Activated CD8-positive, alpha-beta memory T cell treated with anti-CD3 and anti-CD28 coated beads, Interleukin-2, amount 10 ng/mL, durations not matched to agents 7 days and 5 days (primary cell): ENCODE measurements at regions of chr2 and their contacts with region 1.

Region 1: GRCh38 chr2:63861220-63861822 is 19.6 kb downstream of the UGP2 start:
- DNase-seq: peak; percentile 61
- ATAC-seq: peak; percentile 49
- H3K4me3 Mint-ChIP-seq: no peak overlapping the region
- H3K27ac Mint-ChIP-seq: peak overlapping the region; percentile 62
- H3K4me1 Mint-ChIP-seq: peaks cover 48% of the 10 kb centered on the region
- H3K27me3 Mint-ChIP-seq: no peaks in the 10 kb centered on the region

Region 2: GRCh38 chr2:63692002-63692606 is 169.2 kb before region 1 on chr2:
- CTCF ChIA-PET with region 1: interaction called, 16 read pairs
- DNase-seq: no peak
- ATAC-seq: no peak
- H3K4me3 Mint-ChIP-seq: no peak overlapping the region
- H3K27ac Mint-ChIP-seq: no peak overlapping the region
- H3K4me1 Mint-ChIP-seq: no peaks in the 10 kb centered on the region
- H3K27me3 Mint-ChIP-seq: peaks cover 4% of the 10 kb centered on the region

Region 3: DNA sequence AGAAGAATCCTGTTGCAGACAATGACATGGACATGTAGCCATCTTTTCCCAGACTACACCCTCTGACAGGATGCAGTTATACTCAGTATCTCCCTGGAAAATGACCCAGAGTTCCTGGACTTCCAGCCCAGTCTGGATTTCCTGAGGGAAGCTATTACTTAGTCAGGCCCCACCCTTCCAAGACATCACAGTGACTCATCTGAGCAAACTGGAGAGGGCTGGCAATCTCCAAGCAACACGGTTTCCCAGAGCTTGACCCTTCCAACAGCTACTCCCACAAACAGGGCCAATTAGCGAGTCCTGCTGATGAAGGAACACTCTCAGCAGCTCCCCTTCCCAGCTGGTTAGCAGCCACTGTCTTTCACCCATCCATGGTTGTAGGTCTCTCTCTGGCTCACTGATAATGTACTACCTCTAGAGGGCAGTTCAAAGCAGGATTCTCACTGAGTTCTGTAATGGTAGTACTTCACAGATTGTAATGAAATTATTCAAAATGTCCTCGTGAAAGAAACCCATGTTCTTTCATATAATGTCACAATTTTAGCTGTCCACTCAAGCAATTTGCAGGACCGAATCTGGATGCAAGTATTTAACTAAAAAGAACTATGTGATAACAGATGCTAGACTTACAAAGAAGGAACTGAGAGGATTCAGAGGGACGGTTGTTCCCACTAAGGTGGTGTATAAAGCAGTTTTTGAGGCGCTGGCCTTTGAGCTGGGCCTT is 162.3 kb before region 1 on chr2:
- CTCF ChIA-PET with region 1: interaction called, 32 read pairs
- DNase-seq: no peak
- ATAC-seq: peak; percentile 87
- H3K4me3 Mint-ChIP-seq: no peak overlapping the region
- H3K27ac Mint-ChIP-seq: no peak overlapping the region
- H3K4me1 Mint-ChIP-seq: peaks cover 2% of the 10 kb centered on the region
- H3K27me3 Mint-ChIP-seq: peaks cover 3% of the 10 kb centered on the region

Region 4: DNA sequence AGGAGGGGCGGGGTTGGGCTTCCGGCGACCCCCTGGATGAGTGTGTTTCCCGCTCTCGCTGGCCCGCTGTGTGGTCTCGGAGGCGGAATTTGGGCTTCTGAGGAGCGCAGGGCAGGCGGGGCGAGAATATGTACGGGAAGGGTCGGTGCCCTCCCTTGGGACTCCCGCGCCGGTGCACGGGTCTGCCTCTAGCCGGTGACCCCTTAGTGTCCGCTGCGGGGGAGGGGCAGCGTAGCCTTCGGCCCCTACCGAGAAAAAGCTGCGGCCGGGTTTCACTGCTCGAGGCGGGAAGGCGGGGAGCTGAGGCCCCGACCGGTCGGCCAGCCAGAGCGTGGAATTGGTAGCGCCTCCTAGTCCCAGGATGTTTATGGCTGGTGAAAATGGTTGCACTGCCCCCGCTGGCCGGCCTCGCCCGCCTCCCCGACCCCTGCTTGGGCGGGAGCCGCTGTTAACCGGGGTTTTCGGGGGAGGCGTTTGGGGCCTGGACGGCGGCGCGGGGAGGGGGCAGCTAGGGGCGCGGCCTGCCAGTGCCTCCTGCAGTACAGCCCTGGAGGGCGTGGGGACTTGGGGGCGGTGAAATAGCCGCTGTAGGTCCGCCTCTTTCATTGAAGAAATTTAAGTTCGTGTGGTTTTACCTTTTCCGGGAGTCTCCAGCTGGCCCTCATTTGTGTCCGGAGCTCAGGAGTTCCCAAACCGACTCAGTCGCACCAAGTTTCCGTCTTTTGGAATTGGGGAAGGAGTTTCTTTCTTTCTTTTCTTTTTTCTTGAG is 19.9 kb before region 1 on chr2 and contains the start of gene UGP2:
- CTCF ChIA-PET with region 1: interaction called, 52 read pairs
- DNase-seq: peak; percentile 95
- ATAC-seq: peak; percentile 77
- H3K4me3 Mint-ChIP-seq: peak within 1 kb of the TSS; percentile 100
- H3K27ac Mint-ChIP-seq: peak within 1 kb of the TSS; percentile 100
- H3K4me1 Mint-ChIP-seq: peaks cover 51% of the 10 kb centered on the region
- H3K27me3 Mint-ChIP-seq: no peaks in the 10 kb centered on the region
- total RNA-seq, gene UGP2: 109 to 124 TPM

Region 5: DNA sequence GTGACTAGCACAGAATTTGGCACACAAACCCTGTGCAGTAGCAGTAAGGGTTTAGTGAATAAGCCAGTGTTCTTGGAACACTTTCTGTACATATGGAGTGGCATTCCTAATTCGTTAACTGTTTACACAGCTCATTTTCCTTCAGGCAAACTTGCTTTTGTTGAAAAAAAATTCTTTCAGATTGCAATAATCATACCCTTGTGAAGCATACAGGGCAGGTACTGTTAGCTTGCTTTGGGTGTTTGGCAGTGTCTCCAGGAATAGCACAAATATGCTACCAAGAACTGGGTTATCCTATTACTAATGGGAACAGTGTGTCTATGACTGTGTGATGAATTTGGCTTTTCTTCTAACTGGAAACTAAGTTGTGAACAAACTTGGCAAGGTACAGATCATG is 13.8 kb after region 1 on chr2:
- CTCF ChIA-PET with region 1: interaction called, 14 read pairs
- DNase-seq: no peak
- ATAC-seq: no peak
- H3K4me3 Mint-ChIP-seq: no peak overlapping the region
- H3K27ac Mint-ChIP-seq: no peak overlapping the region
- H3K4me1 Mint-ChIP-seq: peaks cover 15% of the 10 kb centered on the region
- H3K27me3 Mint-ChIP-seq: no peaks in the 10 kb centered on the region